Heart right ventricle (tissue), 16 donors: ENCODE measurements at regions of chr13 and their contacts with region 1.

Region 1: DNA sequence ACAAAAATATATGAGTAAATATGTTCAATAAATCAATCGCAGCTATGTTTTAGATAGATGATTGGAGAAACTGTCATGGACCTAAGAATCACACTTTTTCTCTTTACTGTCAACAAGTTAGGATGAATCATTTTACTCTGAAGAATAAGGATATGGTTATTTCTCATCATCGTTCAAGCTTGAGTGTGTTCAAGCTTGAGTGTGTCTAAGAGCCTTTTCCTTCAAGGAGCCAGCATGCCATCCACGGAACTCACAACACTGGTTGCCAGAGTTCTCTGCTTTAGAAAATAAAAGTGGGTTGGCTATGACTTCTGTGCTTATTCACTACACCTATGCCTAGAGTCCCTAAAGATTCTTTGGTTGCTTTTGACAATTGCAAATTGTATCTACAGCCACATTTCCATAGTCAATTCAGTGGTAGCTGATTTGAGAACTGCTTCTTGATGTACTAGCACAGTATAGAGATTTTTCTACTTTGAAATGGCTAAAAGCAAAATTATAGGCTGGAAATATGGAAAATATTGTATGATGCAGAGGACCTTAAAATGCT is 58.1 kb upstream of the SCEL start:
- DNase-seq: no peak
- ATAC-seq: no peak
- H3K4me3 ChIP-seq: peak overlapping the region in 3 of 10 donors; percentile 49 to 54 (median 51)
- H3K27ac ChIP-seq: no peak overlapping the region
- H3K4me1 ChIP-seq: peaks cover 0 to 9% (median 0%) of the 10 kb centered on the region in 9 donors
- H3K27me3 ChIP-seq: no peaks in the 10 kb centered on the region
- CTCF ChIP-seq: no peak

Region 2: DNA sequence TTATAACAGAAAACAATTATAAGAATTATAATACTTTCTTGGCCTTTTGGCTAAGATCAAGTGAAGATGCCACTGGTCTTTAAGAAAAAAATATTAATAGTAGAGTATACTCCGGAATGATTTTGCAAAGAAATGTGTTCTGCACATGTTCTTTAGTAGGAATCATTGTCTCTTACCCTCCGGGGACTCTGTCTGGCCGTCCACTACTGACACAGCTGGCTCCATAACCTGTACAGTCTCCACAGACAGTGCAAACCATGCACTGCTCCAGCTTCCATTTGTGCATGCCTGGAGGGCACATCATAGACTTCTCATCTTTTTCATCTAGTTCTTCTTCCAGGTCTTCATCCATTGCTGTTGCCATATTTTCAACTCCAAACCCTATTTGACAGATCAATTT is 226.4 kb before region 1 on chr13:
- intact Hi-C with region 1: loop called in 1 of 10 experiments (anchors 10 kb)
- DNase-seq: no peak
- ATAC-seq: no peak
- H3K4me3 ChIP-seq: no peak overlapping the region
- H3K27ac ChIP-seq: no peak overlapping the region
- H3K4me1 ChIP-seq: no peaks in the 10 kb centered on the region
- H3K27me3 ChIP-seq: no peaks in the 10 kb centered on the region
- CTCF ChIP-seq: no peak

Region 3: GRCh38 chr13:77274126-77274525 is 203.2 kb before region 1 on chr13:
- intact Hi-C with region 1: loop called in 3 of 10 experiments (anchors 10 kb)
- DNase-seq: no peak
- ATAC-seq: no peak
- H3K4me3 ChIP-seq: no peak overlapping the region
- H3K27ac ChIP-seq: no peak overlapping the region
- H3K4me1 ChIP-seq: no peaks in the 10 kb centered on the region
- H3K27me3 ChIP-seq: no peaks in the 10 kb centered on the region
- CTCF ChIP-seq: peak in 4 of 9 donors; percentile 15 to 36 (median 23)

Region 4: GRCh38 chr13:77329133-77329910 is 148.1 kb before region 1 on chr13:
- intact Hi-C with region 1: loop called in 3 of 10 experiments (anchors 5 to 10 kb)
- DNase-seq: peak; percentile 75 to 86
- ATAC-seq: peak; percentile 74 to 88 (median 86)
- H3K4me3 ChIP-seq: peak overlapping the region; percentile 68 to 97 (median 82)
- H3K27ac ChIP-seq: peak overlapping the region; percentile 70 to 94 (median 87)
- H3K4me1 ChIP-seq: peaks cover 0 to 40% (median 29%) of the 10 kb centered on the region in 9 donors
- H3K27me3 ChIP-seq: no peaks in the 10 kb centered on the region
- CTCF ChIP-seq: peak in 2 of 9 donors; percentile 8 to 12

Region 5: DNA sequence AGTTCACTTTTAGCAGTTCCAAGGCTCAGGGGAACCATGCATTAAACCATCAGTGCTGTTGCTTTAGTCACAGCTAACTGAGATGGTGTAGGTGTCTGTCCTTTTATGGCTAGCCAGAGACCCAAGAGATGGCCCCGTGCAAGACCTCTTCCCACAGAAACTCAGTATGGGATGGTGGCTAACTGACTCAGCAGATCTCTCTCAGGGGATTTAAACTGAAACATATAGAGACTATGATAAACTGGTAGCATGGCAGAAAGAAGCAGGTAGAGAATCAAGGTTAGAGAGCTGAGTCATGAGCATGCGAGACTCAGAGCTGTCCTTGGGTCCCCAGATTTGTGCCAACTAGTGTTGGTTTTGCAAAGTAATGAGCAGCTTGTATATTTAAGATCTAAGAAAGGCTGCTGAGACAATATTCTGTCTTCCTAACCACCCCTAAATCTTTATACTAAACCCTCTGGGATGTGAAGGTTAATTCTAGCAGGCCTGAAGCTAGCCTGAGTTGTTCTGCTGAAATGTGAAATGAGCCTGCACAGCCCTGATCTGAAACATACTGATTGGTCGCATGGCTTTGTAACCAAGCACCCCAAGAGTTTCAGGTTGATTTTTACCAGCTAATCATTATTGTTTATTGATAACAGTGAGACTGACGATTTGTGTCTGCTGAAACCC is 51.6 kb after region 1 on chr13:
- intact Hi-C with region 1: no loop called
- DNase-seq: no peak
- ATAC-seq: no peak
- H3K4me3 ChIP-seq: no peak overlapping the region
- H3K27ac ChIP-seq: no peak overlapping the region
- H3K4me1 ChIP-seq: no peaks in the 10 kb centered on the region
- H3K27me3 ChIP-seq: peaks cover 0 to 3% (median 0%) of the 10 kb centered on the region in 7 donors
- CTCF ChIP-seq: no peak

Region 6: DNA sequence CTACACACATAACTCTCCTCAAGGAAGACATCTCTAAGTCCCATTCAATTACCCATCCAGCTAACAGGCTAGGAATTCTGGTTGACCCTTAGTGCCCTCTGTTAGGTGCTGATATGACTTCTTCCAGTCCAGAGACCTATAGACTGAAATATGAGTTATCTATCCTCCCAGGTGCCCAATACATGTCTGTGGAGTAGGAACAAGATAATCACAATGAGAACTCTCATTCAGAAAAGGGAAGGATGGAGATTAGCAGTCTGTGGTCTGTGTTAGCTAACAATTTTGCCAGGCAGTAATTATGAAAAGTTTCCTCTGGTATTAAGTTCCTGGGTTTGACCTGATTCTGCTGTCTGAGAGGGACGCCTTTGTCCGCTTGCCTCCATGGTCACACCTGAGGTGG is 175.9 kb after region 1 on chr13:
- intact Hi-C with region 1: no loop called
- DNase-seq: no peak
- ATAC-seq: no peak
- H3K4me3 ChIP-seq: no peak overlapping the region
- H3K27ac ChIP-seq: no peak overlapping the region
- H3K4me1 ChIP-seq: no peaks in the 10 kb centered on the region
- H3K27me3 ChIP-seq: peaks cover 0 to 5% (median 0%) of the 10 kb centered on the region in 7 donors
- CTCF ChIP-seq: no peak